Activated CD8-positive, alpha-beta memory T cell treated with anti-CD3 and anti-CD28 coated beads, Interleukin-2, amount 10 ng/mL, durations not matched to agents 7 days and 5 days (primary cell): ENCODE measurements at regions of chr1 and their contacts with region 1.

Region 1: GRCh38 chr1:154198756-154199562 is 7.1 kb upstream of the TPM3 start:
- DNase-seq: peak; percentile 58
- ATAC-seq: peak; percentile 77
- H3K4me3 Mint-ChIP-seq: no peak overlapping the region
- H3K27ac Mint-ChIP-seq: no peak overlapping the region
- H3K4me1 Mint-ChIP-seq: peaks cover 3% of the 10 kb centered on the region
- H3K27me3 Mint-ChIP-seq: peaks cover 10% of the 10 kb centered on the region

Region 2: GRCh38 chr1:154183045-154183915 is 15.7 kb before region 1 on chr1:
- CTCF ChIA-PET with region 1: interaction called, 12 read pairs
- DNase-seq: peak; percentile 97
- ATAC-seq: peak; percentile 82
- H3K4me3 Mint-ChIP-seq: peak overlapping the region; percentile 99
- H3K27ac Mint-ChIP-seq: peak overlapping the region; percentile 99
- H3K4me1 Mint-ChIP-seq: peaks cover 42% of the 10 kb centered on the region
- H3K27me3 Mint-ChIP-seq: peaks cover 4% of the 10 kb centered on the region

Region 3: GRCh38 chr1:154256686-154257085 is 57.7 kb after region 1 on chr1:
- CTCF ChIA-PET with region 1: no interaction called
- DNase-seq: no peak
- ATAC-seq: no peak
- H3K4me3 Mint-ChIP-seq: no peak overlapping the region
- H3K27ac Mint-ChIP-seq: no peak overlapping the region
- H3K4me1 Mint-ChIP-seq: peaks cover under 1% of the 10 kb centered on the region
- H3K27me3 Mint-ChIP-seq: no peaks in the 10 kb centered on the region

Region 4: GRCh38 chr1:154344977-154345837 is 146.2 kb after region 1 on chr1:
- CTCF ChIA-PET with region 1: interaction called, 10 read pairs
- DNase-seq: peak; percentile 84
- ATAC-seq: peak; percentile 24
- H3K4me3 Mint-ChIP-seq: no peak overlapping the region
- H3K27ac Mint-ChIP-seq: peak overlapping the region; percentile 58
- H3K4me1 Mint-ChIP-seq: peaks cover 65% of the 10 kb centered on the region
- H3K27me3 Mint-ChIP-seq: no peaks in the 10 kb centered on the region